Pancreas (tissue), 10 donors: ENCODE measurements at regions of chr11 and their contacts with region 1.

Region 1: DNA sequence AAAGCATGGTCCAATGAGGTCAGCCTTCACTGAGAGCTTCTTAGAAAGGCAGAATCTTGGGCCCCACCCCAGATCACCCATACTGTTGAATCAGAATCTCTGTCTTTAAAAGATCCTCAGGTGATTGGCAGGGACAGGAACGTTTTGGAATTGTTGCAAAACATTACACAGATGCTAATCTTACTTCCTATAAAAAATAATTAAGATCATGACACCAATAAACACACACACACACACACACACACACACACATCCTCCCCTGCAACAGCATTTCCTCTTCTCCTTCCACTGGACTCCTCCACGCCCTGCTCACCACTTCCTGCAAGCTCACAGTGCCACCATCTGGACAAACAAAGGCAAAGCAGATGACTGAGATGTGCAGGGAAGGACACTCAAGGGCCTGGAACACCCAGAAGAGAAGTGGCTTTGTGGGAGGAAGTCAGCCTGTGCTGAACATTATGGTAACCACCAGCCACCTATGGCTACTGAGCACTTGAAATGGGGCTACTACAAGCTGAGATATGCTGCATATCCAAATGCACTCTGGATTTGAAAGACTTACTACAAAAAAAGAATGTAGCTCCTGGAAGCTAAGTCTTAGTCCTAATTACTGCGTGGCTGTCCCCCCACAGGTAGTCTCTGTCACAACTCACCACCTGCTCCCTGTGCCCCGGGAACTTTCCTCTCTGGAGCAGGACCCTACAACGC is 65.6 kb downstream of the BTG4 start:
- DNase-seq: peak in 4 of 6 donors; percentile 63 to 82 (median 77)
- ATAC-seq: peak; percentile 96 to 99 (median 98)
- H3K4me3 ChIP-seq: no peak overlapping the region
- H3K27ac ChIP-seq: no peak overlapping the region
- H3K4me1 ChIP-seq: peaks cover 0 to under 1% (median under 1%) of the 10 kb centered on the region in 3 donors
- H3K27me3 ChIP-seq: no peaks in the 10 kb centered on the region
- CTCF ChIP-seq: peak; percentile 33 to 62 (median 46)

Region 2: DNA sequence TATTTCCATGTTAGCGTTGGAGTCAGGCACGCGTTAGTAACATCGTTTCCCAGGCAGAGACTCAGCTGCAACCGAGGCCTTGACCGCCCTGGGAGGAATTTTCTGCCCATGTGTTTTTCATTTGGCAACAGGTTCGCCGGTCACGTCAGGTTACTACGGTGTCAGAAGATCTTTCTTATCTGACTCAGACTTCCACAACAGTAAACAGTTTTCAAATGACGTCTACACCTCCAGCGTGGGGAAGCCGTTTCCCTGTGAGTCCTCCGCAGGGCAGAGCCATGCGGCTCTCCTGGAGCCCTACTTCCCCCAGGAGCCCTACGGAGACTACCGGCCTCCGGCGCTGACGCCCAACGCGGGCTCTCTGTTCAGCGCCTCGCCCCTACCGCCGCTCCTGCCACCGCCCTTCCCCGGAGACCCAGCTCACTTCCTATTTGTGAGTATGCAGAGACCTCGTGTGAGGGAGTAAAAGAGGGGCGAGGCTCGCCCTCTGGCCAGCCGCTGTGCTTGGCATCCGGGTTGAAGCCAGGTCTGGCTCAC is 162.5 kb before region 1 on chr11:
- intact Hi-C with region 1: loop called in 2 of 3 experiments (anchors 5 kb)
- DNase-seq: peak in 1 of 6 donors; percentile 68
- ATAC-seq: peak in 2 of 4 donors; percentile 41 to 73
- H3K4me3 ChIP-seq: no peak overlapping the region
- H3K27ac ChIP-seq: no peak overlapping the region
- H3K4me1 ChIP-seq: no peaks in the 10 kb centered on the region
- H3K27me3 ChIP-seq: no peaks in the 10 kb centered on the region
- CTCF ChIP-seq: no peak

Region 3: GRCh38 chr11:111344032-111344431 is 102.5 kb before region 1 on chr11:
- intact Hi-C with region 1: no loop called
- DNase-seq: no peak
- ATAC-seq: peak in 3 of 4 donors; percentile 57 to 71 (median 66)
- H3K4me3 ChIP-seq: no peak overlapping the region
- H3K27ac ChIP-seq: no peak overlapping the region
- H3K4me1 ChIP-seq: peaks cover 0 to 9% (median 0%) of the 10 kb centered on the region in 3 donors
- H3K27me3 ChIP-seq: no peaks in the 10 kb centered on the region
- CTCF ChIP-seq: no peak

Region 4: GRCh38 chr11:111387363-111387762 is 59.2 kb before region 1 on chr11:
- intact Hi-C with region 1: no loop called
- DNase-seq: peak; percentile 88 to 97 (median 94)
- ATAC-seq: peak; percentile 95 to 98 (median 97)
- H3K4me3 ChIP-seq: no peak overlapping the region
- H3K27ac ChIP-seq: peak overlapping the region in 2 of 4 donors; percentile 60 to 67
- H3K4me1 ChIP-seq: peaks cover 12 to 17% (median 14%) of the 10 kb centered on the region in 3 donors
- H3K27me3 ChIP-seq: no peaks in the 10 kb centered on the region
- CTCF ChIP-seq: no peak

Region 5: GRCh38 chr11:111601979-111602864 is 155.7 kb after region 1 on chr11 and contains the start of gene SIK2:
- intact Hi-C with region 1: no loop called
- DNase-seq: peak; percentile 95 to 98 (median 96)
- ATAC-seq: peak; percentile 88 to 93 (median 91)
- H3K4me3 ChIP-seq: peak within 1 kb of the TSS; percentile 83 to 95 (median 86)
- H3K27ac ChIP-seq: peak within 1 kb of the TSS; percentile 94 to 98 (median 96)
- H3K4me1 ChIP-seq: peaks cover 1 to 31% (median 21%) of the 10 kb centered on the region in 3 donors
- H3K27me3 ChIP-seq: no peaks in the 10 kb centered on the region
- CTCF ChIP-seq: peak; percentile 50 to 93 (median 90)
- total RNA-seq, gene SIK2: 10.7 to 24.7 (median 18.3) TPM

Region 6: GRCh38 chr11:111612224-111612623 is 165.7 kb after region 1 on chr11:
- intact Hi-C with region 1: no loop called
- DNase-seq: no peak
- ATAC-seq: peak in 2 of 4 donors; percentile 15 to 34
- H3K4me3 ChIP-seq: no peak overlapping the region
- H3K27ac ChIP-seq: no peak overlapping the region
- H3K4me1 ChIP-seq: peaks cover 9 to 29% (median 24%) of the 10 kb centered on the region in 3 donors
- H3K27me3 ChIP-seq: no peaks in the 10 kb centered on the region
- CTCF ChIP-seq: no peak